Right lobe of liver (tissue), 6 donors: ENCODE measurements at regions of chrX and their contacts with region 1.

Region 1: GRCh38 chrX:153554519-153555167 is 37.2 kb downstream of the ATP2B3 start:
- DNase-seq: peak; percentile 57 to 71 (median 70)
- ATAC-seq: peak; percentile 76 to 92 (median 90)
- H3K4me3 ChIP-seq: no peak overlapping the region
- H3K27ac ChIP-seq: no peak overlapping the region
- H3K4me1 ChIP-seq: no peaks in the 10 kb centered on the region
- H3K27me3 ChIP-seq: no peaks in the 10 kb centered on the region
- CTCF ChIP-seq: peak; percentile 63 to 75 (median 70)
- POLR2A ChIP-seq: no peak

Region 2: GRCh38 chrX:153667956-153668396 is 113.3 kb after region 1 on chrX:
- intact Hi-C with region 1: loop called (anchors 5 to 10 kb)
- DNase-seq: peak; percentile 81 to 85 (median 84)
- ATAC-seq: peak; percentile 86 to 96 (median 95)
- H3K4me3 ChIP-seq: no peak overlapping the region
- H3K27ac ChIP-seq: no peak overlapping the region
- H3K4me1 ChIP-seq: no peaks in the 10 kb centered on the region
- H3K27me3 ChIP-seq: no peaks in the 10 kb centered on the region
- CTCF ChIP-seq: peak; percentile 73 to 83 (median 77)
- POLR2A ChIP-seq: no peak